Activated B cell treated with CpG ODN at 0.5 μM for 24 hours (primary cell): ENCODE measurements at regions of chr16 and their contacts with region 1.

Region 1: GRCh38 chr16:57045694-57046381 is 46.5 kb upstream of the CPNE2 start:
- DNase-seq: peak; percentile 57
- ATAC-seq: peak; percentile 25
- H3K4me3 Mint-ChIP-seq: peak overlapping the region; percentile 68
- H3K27ac Mint-ChIP-seq: peak overlapping the region; percentile 92
- H3K4me1 Mint-ChIP-seq: peaks cover 87% of the 10 kb centered on the region
- H3K27me3 Mint-ChIP-seq: no peaks in the 10 kb centered on the region
- CTCF ChIP-seq: no peak

Region 2: DNA sequence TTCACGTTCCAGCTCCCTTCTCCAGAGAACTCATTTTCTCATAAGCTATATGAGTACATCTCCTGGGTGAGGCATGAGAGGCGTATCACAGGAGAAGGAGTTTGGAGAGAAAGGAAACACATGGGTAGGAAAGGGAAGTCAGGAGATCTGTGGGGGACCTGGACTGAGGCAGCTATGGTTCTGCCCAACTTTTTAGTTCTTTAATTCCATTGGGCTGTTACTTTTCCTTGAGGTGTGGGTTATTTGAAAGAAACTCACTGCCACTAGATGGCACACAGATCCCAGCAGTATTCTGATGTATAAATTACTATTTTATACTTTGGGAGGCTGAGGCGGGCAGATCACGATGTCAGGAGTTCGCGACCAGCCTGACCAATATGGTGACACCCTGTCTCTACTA is 252.3 kb before region 1 on chr16:
- CTCF ChIA-PET with region 1: interaction called, 3 read pairs
- POLR2A ChIA-PET with region 1: no interaction called
- intact Hi-C with region 1: loop called (anchors 1 kb)
- DNase-seq: no peak
- ATAC-seq: no peak
- H3K4me3 Mint-ChIP-seq: no peak overlapping the region
- H3K27ac Mint-ChIP-seq: no peak overlapping the region
- H3K4me1 Mint-ChIP-seq: peaks cover 2% of the 10 kb centered on the region
- H3K27me3 Mint-ChIP-seq: no peaks in the 10 kb centered on the region
- CTCF ChIP-seq: no peak

Region 3: GRCh38 chr16:56938422-56939156 is 107.2 kb before region 1 on chr16:
- CTCF ChIA-PET with region 1: interaction called, 6 read pairs
- POLR2A ChIA-PET with region 1: interaction called, 18 read pairs
- intact Hi-C with region 1: no loop called
- DNase-seq: no peak
- ATAC-seq: no peak
- H3K4me3 Mint-ChIP-seq: peak overlapping the region; percentile 81
- H3K27ac Mint-ChIP-seq: peak overlapping the region; percentile 83
- H3K4me1 Mint-ChIP-seq: peaks cover 87% of the 10 kb centered on the region
- H3K27me3 Mint-ChIP-seq: no peaks in the 10 kb centered on the region
- CTCF ChIP-seq: no peak

Region 4: GRCh38 chr16:56970934-56971767 is 74.7 kb before region 1 on chr16:
- CTCF ChIA-PET with region 1: interaction called, 108 read pairs
- POLR2A ChIA-PET with region 1: interaction called, 87 read pairs
- intact Hi-C with region 1: loop called (anchors 1 kb)
- DNase-seq: peak; percentile 53
- ATAC-seq: peak; percentile 96
- H3K4me3 Mint-ChIP-seq: peak overlapping the region; percentile 66
- H3K27ac Mint-ChIP-seq: peak overlapping the region; percentile 97
- H3K4me1 Mint-ChIP-seq: peaks cover 66% of the 10 kb centered on the region
- H3K27me3 Mint-ChIP-seq: no peaks in the 10 kb centered on the region
- CTCF ChIP-seq: no peak

Region 5: GRCh38 chr16:57000271-57001025 is 45.4 kb before region 1 on chr16:
- CTCF ChIA-PET with region 1: interaction called, 8 read pairs
- POLR2A ChIA-PET with region 1: interaction called, 93 read pairs
- intact Hi-C with region 1: loop called (anchors 2 kb)
- DNase-seq: peak; percentile 40
- ATAC-seq: peak; percentile 72
- H3K4me3 Mint-ChIP-seq: peak overlapping the region; percentile 55
- H3K27ac Mint-ChIP-seq: peak overlapping the region; percentile 90
- H3K4me1 Mint-ChIP-seq: peaks cover 87% of the 10 kb centered on the region
- H3K27me3 Mint-ChIP-seq: no peaks in the 10 kb centered on the region
- CTCF ChIP-seq: no peak

Region 6: DNA sequence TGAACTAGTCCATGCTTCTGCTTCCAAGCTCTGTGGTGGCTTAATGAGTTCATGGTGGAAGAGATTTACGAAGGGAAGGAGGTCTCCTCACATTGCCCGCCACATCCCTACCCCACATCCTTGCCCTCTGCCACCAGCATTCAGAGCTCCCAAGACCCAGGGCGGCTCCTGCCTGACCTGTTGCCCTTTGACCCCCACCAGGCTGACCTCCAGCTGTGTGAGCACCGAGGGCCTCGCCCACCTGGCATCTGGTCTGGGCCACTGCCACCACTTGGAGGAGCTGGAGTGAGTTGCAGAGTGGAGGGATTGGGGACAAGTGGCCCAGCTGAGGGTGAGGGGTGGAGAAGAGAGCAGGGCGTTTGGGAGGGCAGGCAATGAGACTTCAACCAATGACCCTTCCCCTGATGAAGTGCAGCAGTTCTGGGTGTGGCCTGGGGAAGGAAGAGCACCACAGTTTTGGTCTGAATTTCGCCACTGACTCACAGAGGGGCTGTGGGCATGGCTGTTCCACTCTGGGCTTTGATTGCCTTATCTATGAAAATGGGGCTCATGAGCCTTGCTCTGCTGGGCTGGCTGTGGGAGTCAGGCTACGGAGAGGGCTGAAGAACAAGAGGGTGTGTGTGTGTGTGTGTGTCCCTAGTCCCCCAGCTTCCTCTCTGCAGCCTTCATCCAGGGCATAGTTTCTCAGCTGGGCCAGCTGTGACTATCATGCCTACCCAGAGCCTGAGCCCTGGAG is 24.0 kb after region 1 on chr16:
- CTCF ChIA-PET with region 1: no interaction called
- POLR2A ChIA-PET with region 1: interaction called, 12 read pairs
- intact Hi-C with region 1: no loop called
- DNase-seq: no peak
- ATAC-seq: no peak
- H3K4me3 Mint-ChIP-seq: no peak overlapping the region
- H3K27ac Mint-ChIP-seq: peak overlapping the region; percentile 24
- H3K4me1 Mint-ChIP-seq: peaks cover 14% of the 10 kb centered on the region
- H3K27me3 Mint-ChIP-seq: no peaks in the 10 kb centered on the region
- CTCF ChIP-seq: no peak

Region 7: DNA sequence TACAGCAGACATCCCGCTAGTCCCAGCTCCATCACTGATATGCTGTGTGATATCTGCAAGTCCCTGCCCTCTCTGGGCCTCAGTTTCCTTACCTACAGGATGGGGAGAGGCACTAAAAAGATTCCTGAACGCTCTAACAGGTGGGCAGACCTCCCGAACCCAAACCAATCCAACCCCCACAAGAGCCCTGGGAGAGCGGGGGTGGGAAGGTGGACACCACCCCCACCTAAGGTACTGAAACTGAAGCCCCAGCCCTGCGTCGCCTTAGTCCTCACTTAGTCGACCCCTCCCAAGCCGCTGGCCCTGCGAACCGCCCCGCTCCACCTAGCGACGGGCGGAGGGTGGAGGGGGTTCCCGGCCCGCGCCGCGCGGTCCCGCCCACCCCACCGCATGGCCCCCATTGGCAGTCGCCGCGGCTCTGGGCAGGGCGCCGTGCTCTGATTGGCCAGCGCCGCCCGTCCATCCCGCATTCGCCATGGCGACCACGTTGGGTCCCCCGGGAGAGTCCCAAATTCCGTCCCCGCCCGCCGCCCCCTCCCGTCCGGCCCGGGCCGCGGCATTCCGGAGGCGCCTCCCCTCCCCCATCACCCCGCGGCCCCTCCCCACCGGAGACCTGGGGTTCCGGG is 490.0 kb after region 1 on chr16:
- CTCF ChIA-PET with region 1: no interaction called
- POLR2A ChIA-PET with region 1: no interaction called
- intact Hi-C with region 1: loop called (anchors 10 kb)
- DNase-seq: peak; percentile 87
- ATAC-seq: peak; percentile 70
- H3K4me3 Mint-ChIP-seq: peak overlapping the region; percentile 85
- H3K27ac Mint-ChIP-seq: peak overlapping the region; percentile 89
- H3K4me1 Mint-ChIP-seq: peaks cover 83% of the 10 kb centered on the region
- H3K27me3 Mint-ChIP-seq: no peaks in the 10 kb centered on the region
- CTCF ChIP-seq: no peak